ENCODE measurements at regions of chr3 and their contacts with region 1.

Region 1: GRCh38 chr3:115814778-115815380 is 191.6 kb downstream of the GAP43 start:
- DNase-seq: peak; percentile 85
- H3K4me3 Mint-ChIP-seq: no peak overlapping the region
- H3K27ac Mint-ChIP-seq: no peak overlapping the region
- H3K4me1 Mint-ChIP-seq: no peaks in the 10 kb centered on the region
- H3K27me3 Mint-ChIP-seq: no peaks in the 10 kb centered on the region
- CTCF ChIP-seq: peak; percentile 81

Region 2: GRCh38 chr3:115040673-115041286 is 774.1 kb before region 1 on chr3:
- CTCF ChIA-PET with region 1: interaction called, 4 read pairs
- POLR2A ChIA-PET with region 1: no interaction called
- intact Hi-C with region 1: loop called (anchors 1 kb)
- DNase-seq: peak; percentile 51
- H3K4me3 Mint-ChIP-seq: no peak overlapping the region
- H3K27ac Mint-ChIP-seq: no peak overlapping the region
- H3K4me1 Mint-ChIP-seq: no peaks in the 10 kb centered on the region
- H3K27me3 Mint-ChIP-seq: no peaks in the 10 kb centered on the region
- CTCF ChIP-seq: peak; percentile 51

Region 3: DNA sequence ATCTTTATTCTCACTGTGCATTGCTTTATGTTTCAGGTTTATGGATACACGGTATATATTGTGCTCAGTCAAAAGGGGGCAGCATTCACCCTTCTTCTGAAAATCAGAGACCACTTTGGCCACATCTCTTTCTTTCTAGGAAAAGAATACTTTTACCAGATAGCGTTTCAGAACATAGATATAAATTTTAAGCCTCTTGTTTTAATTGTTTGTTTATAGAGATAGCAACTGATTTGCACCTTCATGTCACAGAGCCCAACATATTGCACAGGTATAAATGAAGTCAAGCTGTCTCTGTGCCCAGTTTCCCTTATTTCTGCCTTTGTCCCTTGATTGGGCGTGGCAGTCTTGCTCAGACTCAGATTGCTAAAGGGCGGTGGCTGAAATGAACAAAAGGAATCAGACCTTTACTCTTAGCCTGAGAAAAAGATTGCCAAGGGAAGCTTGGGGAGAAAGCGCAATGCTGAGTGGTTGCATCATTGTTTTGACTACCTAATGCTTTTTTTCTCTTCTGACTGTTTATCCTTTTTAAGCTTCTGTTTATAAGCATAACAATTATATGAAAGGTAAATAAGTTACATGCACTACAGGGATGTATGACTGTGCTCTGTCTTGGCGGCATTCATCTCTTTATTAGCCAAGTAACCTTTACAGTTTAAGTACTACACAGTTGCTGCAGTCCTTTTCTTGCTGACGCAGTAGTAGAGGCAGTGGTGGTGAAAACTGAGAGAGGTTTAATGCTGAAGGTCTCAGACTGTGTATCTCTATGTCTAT is 597.0 kb before region 1 on chr3:
- CTCF ChIA-PET with region 1: interaction called, 21 read pairs
- POLR2A ChIA-PET with region 1: no interaction called
- intact Hi-C with region 1: loop called (anchors 1 kb)
- DNase-seq: peak; percentile 71
- H3K4me3 Mint-ChIP-seq: no peak overlapping the region
- H3K27ac Mint-ChIP-seq: peak overlapping the region; percentile 9
- H3K4me1 Mint-ChIP-seq: peaks cover 8% of the 10 kb centered on the region
- H3K27me3 Mint-ChIP-seq: no peaks in the 10 kb centered on the region
- CTCF ChIP-seq: peak; percentile 81

Region 4: DNA sequence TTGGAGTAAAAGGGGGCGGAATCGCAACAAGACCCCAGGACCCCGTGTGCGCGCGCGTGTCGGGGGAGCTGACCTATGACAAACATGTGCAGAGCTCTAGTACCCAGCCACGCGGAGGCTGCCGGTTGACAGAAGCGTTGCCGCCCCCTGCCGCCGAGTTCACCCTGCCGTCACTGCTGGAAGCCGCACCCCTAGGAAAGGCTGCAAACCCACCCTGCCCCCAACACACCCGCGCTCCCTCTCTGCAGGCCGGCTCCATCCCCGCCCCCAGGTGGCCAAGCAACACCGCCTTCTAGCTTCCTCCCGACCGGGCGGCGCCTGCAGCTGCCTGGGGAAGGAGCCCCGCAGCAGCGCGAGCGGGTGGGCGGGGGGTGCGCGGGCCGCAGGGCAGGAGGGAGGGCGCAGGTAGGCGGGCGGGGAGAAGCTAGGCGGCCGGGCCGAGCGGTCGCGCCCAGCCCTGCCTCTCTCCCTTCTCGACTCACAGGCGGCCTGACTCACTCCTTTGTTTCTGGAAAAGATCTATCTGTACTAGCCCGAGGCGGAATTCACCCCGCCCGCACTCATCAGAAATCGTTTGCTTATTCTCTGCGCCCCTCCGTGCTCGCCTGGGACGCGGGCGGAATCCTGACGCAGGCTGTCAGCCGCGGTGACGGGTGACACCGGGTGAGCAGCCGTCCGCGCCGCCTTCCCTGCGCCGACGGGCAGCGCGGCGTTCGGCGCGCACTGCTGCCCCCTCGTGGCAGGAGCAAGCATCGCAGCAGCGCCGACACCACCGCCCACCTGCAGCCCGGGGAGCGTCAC is 30.7 kb before region 1 on chr3:
- CTCF ChIA-PET with region 1: interaction called, 18 read pairs
- POLR2A ChIA-PET with region 1: interaction called, 3 read pairs
- intact Hi-C with region 1: loop called (anchors 1 kb)
- DNase-seq: peak; percentile 86
- H3K4me3 Mint-ChIP-seq: peak overlapping the region; percentile 81
- H3K27ac Mint-ChIP-seq: peak overlapping the region; percentile 90
- H3K4me1 Mint-ChIP-seq: peaks cover 25% of the 10 kb centered on the region
- H3K27me3 Mint-ChIP-seq: no peaks in the 10 kb centered on the region
- CTCF ChIP-seq: peak; percentile 94